Activated CD4-positive, alpha-beta memory T cell treated with anti-CD3 and anti-CD28 coated beads, Interleukin-2, amount 10 ng/mL, durations not matched to agents 7 days and 5 days (primary cell): ENCODE measurements at regions of chr2 and their contacts with region 1.

Region 1: DNA sequence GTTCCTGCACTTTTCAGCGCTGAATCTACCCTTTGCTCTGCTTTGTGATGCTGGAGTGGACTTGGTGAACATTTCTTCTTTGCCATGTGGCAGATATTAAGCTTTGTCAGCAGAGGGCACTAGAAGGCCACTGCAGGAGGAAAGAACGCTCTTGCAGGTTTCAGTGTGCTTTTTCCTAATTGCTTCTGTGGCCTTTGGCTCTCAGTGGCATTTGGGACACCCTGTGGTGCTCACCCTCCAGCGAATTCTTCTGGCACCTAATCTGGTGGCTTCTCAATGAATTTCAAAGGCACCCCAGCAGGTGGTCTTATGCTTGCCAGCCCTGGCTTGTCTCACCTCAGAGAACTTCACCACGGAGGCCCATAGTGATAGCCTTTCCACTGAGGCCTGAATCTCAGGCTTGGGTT is 146.7 kb downstream of the MYO3B start:
- DNase-seq: peak; percentile 37
- H3K4me3 Mint-ChIP-seq: no peak overlapping the region
- H3K27ac Mint-ChIP-seq: no peak overlapping the region
- H3K4me1 Mint-ChIP-seq: no peaks in the 10 kb centered on the region
- H3K27me3 Mint-ChIP-seq: peaks cover 7% of the 10 kb centered on the region

Region 2: DNA sequence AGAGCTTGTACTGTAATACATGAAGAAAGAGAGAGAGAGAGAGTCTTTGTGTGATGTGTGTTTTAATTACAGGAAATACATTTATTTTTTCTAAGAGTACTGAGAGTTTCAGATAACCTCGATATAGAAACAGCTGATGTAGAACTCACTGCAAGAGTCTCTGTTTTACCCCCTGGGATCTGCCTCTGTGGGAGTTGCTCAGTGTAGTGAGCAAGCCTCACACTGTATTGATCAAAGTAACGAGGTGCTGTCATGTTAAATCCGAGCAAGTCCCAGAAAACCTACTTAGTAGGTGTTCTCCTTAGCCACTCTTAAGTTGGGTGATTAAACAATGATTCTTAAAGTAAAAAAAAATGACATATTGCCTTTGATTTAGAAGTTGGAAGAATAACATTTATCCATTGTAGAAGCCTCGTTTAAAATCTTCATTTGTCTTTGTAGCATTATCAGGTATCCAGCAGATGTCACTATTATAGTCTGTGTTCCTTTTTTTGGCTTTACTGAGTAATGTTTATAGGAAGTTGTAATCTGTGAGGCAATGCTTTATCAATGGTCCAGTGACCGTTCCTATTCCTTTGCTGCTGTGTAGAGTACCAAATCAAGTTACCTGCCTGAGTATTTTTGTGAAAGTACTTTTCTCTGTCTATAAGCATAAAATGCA is 72.3 kb after region 1 on chr2:
- CTCF ChIA-PET with region 1: interaction called, 10 read pairs
- POLR2A ChIA-PET with region 1: no interaction called
- DNase-seq: no peak
- H3K4me3 Mint-ChIP-seq: no peak overlapping the region
- H3K27ac Mint-ChIP-seq: no peak overlapping the region
- H3K4me1 Mint-ChIP-seq: no peaks in the 10 kb centered on the region
- H3K27me3 Mint-ChIP-seq: peaks cover 24% of the 10 kb centered on the region

Region 3: GRCh38 chr2:170815746-170816503 is 491.3 kb after region 1 on chr2:
- CTCF ChIA-PET with region 1: interaction called, 13 read pairs
- POLR2A ChIA-PET with region 1: no interaction called
- DNase-seq: peak; percentile 65
- H3K4me3 Mint-ChIP-seq: peak overlapping the region; percentile 65
- H3K27ac Mint-ChIP-seq: peak overlapping the region; percentile 22
- H3K4me1 Mint-ChIP-seq: peaks cover 48% of the 10 kb centered on the region
- H3K27me3 Mint-ChIP-seq: peaks cover 85% of the 10 kb centered on the region